Activated B cell treated with CpG ODN at 0.5 μM for 24 hours (primary cell): ENCODE measurements at regions of chr12 and their contacts with region 1.

Region 1: DNA sequence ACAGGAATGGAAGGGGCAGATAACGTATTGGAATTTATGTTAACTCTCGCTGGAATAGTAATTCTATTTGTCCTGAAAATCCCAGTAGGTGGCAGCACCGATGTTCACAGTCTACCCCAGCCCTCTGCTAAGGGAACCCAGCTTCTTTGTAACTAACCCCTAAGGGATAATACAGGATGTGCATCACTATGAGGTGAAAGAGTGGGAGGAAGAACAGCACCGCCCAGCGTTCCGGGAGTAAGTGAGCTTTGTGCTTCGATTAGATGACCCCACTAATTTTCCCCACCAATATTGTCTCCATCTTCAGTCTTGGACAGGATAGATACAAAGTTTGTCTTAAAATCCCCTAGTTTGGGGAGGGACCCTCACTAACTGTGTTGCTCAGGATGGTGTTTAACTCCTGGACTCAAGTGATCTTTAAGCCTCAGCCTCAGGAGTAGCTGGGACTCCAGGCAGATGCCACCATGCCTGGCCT is 2.7 kb downstream of the SLC2A3 start:
- DNase-seq: peak; percentile 48
- ATAC-seq: peak; percentile 86
- H3K4me3 Mint-ChIP-seq: no peak overlapping the region
- H3K27ac Mint-ChIP-seq: no peak overlapping the region
- H3K4me1 Mint-ChIP-seq: no peaks in the 10 kb centered on the region
- H3K27me3 Mint-ChIP-seq: no peaks in the 10 kb centered on the region
- CTCF ChIP-seq: no peak

Region 2: DNA sequence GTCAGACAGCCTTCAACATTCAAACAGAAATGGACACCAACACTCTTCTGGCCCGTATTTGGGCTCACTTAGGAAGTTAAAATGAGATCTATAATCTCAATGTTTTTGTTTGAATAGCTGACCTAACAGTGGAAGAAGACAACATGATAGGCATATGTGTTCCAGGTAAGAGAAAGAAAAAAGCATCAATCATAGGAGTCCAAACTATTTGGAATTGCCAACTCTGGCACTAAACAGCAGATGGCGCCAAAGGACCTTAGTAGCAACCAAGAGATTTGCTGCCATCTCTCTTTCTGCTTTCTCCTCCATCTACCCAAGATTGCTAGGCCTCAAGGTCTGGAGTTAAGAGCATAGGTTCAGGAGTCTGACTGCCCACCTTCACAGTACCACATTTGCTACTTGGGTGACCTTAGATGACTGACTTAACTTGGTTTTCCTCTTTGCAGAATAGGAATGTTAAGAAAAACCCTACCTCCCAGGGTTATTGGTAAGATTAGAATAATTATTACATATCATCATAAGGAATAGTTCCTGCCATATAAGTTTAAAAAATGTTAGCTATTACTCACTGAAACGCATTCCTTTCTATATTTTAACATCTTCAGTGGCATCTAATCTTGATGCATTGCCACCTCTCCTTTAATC is 713.6 kb before region 1 on chr12:
- CTCF ChIA-PET with region 1: no interaction called
- POLR2A ChIA-PET with region 1: no interaction called
- intact Hi-C with region 1: no loop called
- DNase-seq: peak; percentile 24
- ATAC-seq: peak; percentile 64
- H3K4me3 Mint-ChIP-seq: no peak overlapping the region
- H3K27ac Mint-ChIP-seq: no peak overlapping the region
- H3K4me1 Mint-ChIP-seq: no peaks in the 10 kb centered on the region
- H3K27me3 Mint-ChIP-seq: no peaks in the 10 kb centered on the region
- CTCF ChIP-seq: peak; percentile 90

Region 3: DNA sequence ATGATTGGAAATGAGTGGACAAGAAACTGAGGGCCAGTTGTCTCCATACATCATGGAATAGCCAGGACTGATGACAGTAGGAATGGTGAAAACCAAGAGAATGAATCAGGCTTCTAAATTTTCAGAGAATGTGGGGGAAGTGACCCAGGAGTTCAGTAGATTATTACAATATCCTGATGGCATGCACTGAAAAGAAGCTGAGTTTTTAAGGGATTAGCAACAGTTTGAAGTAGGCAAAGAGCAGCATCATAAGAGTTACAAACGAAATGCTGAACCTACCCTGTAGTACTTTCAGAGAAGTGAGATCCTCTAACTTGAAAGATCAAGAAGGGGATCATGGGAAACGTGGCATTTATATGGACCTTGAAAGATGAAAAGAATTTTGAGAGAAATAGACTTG is 73.7 kb before region 1 on chr12:
- CTCF ChIA-PET with region 1: interaction called, 4 read pairs
- POLR2A ChIA-PET with region 1: interaction called, 3 read pairs
- intact Hi-C with region 1: loop called (anchors 1 kb)
- DNase-seq: no peak
- ATAC-seq: no peak
- H3K4me3 Mint-ChIP-seq: no peak overlapping the region
- H3K27ac Mint-ChIP-seq: no peak overlapping the region
- H3K4me1 Mint-ChIP-seq: peaks cover 2% of the 10 kb centered on the region
- H3K27me3 Mint-ChIP-seq: peaks cover 8% of the 10 kb centered on the region
- CTCF ChIP-seq: no peak

Region 4: DNA sequence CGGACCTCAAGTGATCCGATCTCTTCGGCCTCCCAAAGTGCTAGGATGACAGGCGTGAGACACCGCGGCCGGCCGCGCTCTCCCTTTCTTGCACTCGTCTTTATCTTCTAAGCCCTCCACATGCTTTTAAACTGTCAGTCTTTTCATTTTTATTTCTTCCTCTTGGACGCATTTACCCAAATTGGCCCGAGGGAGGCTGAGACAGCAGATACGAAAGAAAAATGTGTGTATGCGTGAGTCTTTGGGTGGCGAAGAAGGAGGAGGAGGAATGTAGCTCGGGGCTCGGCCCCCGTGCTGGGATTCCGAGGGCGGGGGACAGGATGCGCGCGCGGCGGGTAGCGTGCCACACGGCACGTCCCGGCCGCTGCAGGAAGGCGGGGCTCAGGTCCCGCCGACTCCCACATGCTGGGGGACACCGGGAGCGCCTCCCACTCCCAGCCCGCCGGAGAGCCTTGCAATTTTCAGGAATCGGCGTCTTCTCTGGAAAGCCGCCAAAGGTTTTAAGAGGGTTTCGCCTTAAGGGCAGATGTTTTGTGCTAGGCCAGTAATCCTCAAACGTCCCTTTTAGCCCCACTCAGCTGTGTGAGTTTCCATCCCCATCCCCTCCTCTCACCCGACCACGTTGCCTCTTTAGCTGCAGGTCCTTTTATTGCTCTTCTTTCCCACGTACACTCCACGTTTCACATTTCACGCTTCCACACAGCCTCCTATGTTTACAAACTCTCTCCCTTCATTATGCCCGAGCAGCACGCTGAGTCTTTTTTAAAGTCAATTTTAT is 37.4 kb after region 1 on chr12:
- CTCF ChIA-PET with region 1: interaction called, 14 read pairs
- POLR2A ChIA-PET with region 1: interaction called, 485 read pairs
- intact Hi-C with region 1: loop called (anchors 1 kb)
- DNase-seq: peak; percentile 73
- ATAC-seq: peak; percentile 93
- H3K4me3 Mint-ChIP-seq: peak overlapping the region; percentile 81
- H3K27ac Mint-ChIP-seq: peak overlapping the region; percentile 90
- H3K4me1 Mint-ChIP-seq: peaks cover 32% of the 10 kb centered on the region
- H3K27me3 Mint-ChIP-seq: no peaks in the 10 kb centered on the region
- CTCF ChIP-seq: no peak

Region 5: DNA sequence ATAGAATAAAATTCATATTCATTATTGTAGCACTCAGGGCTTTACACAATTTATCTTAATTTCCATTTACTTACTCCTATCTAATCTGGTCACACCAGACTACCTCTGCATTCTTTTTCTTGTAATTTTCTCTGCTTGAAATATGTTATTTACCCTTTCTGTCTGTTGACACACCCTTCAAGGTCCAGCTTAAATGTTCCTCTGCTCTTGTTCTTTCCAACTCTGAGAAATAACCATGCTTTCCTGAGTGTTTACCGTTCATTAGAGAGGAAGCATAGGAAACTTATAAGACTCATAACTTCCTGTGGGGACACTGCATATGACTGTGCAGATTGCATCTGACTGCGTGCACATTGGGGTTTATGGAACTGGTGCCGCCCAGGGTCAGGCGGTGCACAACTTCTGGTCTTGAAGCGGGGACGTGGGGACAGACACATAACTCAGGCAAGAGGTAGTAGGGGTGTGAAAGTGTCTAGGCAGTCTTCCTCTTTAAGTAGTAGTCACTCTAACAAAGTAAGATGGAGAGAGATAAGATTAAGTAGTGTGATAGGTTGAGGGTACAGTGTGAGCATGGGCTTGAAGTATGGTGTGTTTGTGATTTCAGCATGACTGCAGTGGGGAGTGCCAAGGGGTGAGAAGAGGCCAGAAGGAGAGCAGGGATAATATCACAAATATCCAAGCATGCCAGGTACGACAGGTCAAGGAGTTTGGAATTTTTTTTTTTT is 56.7 kb after region 1 on chr12:
- CTCF ChIA-PET with region 1: interaction called, 98 read pairs
- POLR2A ChIA-PET with region 1: interaction called, 77 read pairs
- intact Hi-C with region 1: loop called (anchors 1 kb)
- DNase-seq: no peak
- ATAC-seq: no peak
- H3K4me3 Mint-ChIP-seq: no peak overlapping the region
- H3K27ac Mint-ChIP-seq: no peak overlapping the region
- H3K4me1 Mint-ChIP-seq: peaks cover 4% of the 10 kb centered on the region
- H3K27me3 Mint-ChIP-seq: no peaks in the 10 kb centered on the region
- CTCF ChIP-seq: no peak

Region 6: DNA sequence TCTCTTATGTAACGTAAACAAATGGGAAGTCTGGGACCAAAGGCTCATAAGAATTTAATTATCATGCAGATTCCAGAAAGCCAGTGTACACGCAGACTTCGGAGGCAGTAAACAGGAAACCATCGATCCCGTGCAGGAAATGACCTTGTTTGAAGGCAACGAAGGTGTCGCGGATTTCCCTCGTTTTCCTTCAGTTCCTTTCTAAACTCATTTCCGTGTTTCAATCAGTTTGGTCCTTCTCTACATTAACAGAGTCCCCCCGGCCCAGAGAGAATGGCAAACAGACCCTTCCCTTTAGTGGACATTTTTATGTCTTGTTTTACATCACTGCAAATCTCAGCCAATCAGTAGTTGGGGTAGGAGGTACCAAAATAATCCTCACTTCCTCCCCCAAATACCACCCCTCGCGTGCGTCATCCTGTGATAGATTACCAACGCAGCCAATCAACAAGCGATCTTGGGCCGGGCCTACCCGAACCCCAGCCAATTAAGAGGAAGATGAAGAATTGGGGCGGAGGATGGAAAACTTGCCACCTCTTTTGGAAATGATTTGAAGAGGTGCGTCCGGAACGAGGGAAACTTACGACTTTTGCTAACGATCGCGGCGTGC is 93.1 kb after region 1 on chr12:
- CTCF ChIA-PET with region 1: interaction called, 4 read pairs
- POLR2A ChIA-PET with region 1: interaction called, 21 read pairs
- intact Hi-C with region 1: loop called (anchors 1 kb)
- DNase-seq: peak; percentile 80
- ATAC-seq: peak; percentile 96
- H3K4me3 Mint-ChIP-seq: peak overlapping the region; percentile 98
- H3K27ac Mint-ChIP-seq: peak overlapping the region; percentile 100
- H3K4me1 Mint-ChIP-seq: peaks cover 13% of the 10 kb centered on the region
- H3K27me3 Mint-ChIP-seq: no peaks in the 10 kb centered on the region
- CTCF ChIP-seq: no peak

Region 7: DNA sequence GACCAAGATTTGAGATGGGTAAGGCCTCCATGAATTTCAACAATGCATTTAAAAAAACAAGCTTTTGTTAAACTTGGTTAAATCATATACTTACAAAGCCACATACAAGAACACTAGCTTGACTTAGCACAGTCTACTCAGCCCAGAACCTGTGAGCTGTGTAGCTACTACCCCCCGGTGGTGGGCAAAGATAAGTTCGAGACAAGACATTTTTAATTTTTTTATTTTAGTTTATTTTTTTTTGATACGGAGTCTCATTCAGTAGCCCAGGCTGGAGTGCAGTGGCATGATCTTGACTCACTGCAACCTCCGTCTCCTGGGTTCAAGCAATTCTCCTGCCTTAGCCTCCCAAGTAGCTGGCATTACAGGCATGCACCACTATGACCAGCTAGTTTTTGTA is 145.1 kb after region 1 on chr12:
- CTCF ChIA-PET with region 1: interaction called, 8 read pairs
- POLR2A ChIA-PET with region 1: interaction called, 8 read pairs
- intact Hi-C with region 1: loop called (anchors 1 kb)
- DNase-seq: no peak
- ATAC-seq: no peak
- H3K4me3 Mint-ChIP-seq: no peak overlapping the region
- H3K27ac Mint-ChIP-seq: no peak overlapping the region
- H3K4me1 Mint-ChIP-seq: peaks cover 38% of the 10 kb centered on the region
- H3K27me3 Mint-ChIP-seq: peaks cover under 1% of the 10 kb centered on the region
- CTCF ChIP-seq: no peak